Psoas muscle (tissue), 8 donors: ENCODE measurements at regions of chr13 and their contacts with region 1.

Region 1: DNA sequence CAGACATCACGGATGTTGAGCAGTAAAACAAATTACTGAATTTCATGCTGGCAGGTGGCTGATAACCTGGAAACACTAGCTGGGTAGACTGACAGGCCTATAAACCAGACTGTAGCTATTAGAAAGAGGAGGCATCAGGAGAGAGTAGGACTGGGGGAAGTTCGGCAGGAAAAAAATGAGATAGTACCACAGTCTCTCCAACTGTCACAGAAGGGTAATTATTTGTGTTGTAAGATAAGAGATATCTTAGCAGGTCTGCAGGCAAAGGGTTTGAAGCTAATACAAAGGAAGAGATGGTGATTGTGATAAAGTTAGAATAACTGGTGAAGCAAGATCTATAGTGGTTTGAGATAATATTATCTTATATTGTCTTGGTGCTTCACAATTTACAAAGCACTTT is 41.7 kb downstream of the MIPEP start:
- DNase-seq: no peak
- ATAC-seq: no peak
- H3K4me3 ChIP-seq: no peak overlapping the region
- H3K27ac ChIP-seq: no peak overlapping the region
- H3K4me1 ChIP-seq: no peaks in the 10 kb centered on the region
- H3K27me3 ChIP-seq: no peaks in the 10 kb centered on the region
- CTCF ChIP-seq: no peak

Region 2: DNA sequence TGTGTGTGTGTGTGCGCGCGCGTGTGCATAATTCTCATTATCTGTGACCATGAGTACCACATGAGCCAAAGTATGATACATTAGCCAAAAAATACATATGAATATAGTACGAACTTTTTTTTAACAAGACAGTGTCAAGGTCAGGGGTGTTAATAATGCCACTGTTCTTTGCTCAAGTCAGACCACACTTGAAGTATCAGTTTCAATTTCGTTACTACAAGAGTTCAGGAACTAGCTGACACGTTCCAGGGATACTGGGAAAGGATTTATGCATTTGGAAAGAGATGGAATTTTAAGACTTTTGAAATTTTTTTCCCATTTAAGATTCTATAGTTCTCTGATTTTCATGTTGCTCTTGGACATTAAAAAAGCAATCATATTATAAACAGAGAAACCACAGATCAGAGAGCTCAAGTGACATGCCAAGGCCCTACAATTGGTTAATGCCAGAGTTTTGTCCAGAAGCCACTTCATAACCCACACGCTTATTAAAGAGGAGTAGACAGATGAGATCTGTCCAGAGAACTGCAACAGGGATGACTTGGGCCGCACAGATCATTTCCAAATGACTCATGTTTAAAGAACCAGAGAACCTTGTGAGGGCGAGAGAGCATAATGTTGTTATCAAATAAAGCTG is 1385.5 kb before region 1 on chr13:
- intact Hi-C with region 1: no loop called
- DNase-seq: no peak
- ATAC-seq: no peak
- H3K4me3 ChIP-seq: no peak overlapping the region
- H3K27ac ChIP-seq: no peak overlapping the region
- H3K4me1 ChIP-seq: no peaks in the 10 kb centered on the region
- H3K27me3 ChIP-seq: peaks cover 0 to 2% (median 0%) of the 10 kb centered on the region in 3 donors
- CTCF ChIP-seq: no peak

Region 3: GRCh38 chr13:23799945-23800344 is 47.6 kb before region 1 on chr13:
- intact Hi-C with region 1: loop called in 1 of 2 experiments (anchors 2 kb)
- DNase-seq: no peak
- ATAC-seq: peak in 3 of 4 donors; percentile 56 to 68 (median 56)
- H3K4me3 ChIP-seq: no peak overlapping the region
- H3K27ac ChIP-seq: peak overlapping the region; percentile 6
- H3K4me1 ChIP-seq: peaks cover 5% of the 10 kb centered on the region
- H3K27me3 ChIP-seq: no peaks in the 10 kb centered on the region
- CTCF ChIP-seq: no peak